Endothelial cell of umbilical vein (primary cell): ENCODE measurements at regions of chr11 and their contacts with region 1.

Region 1: GRCh38 chr11:7986768-7987559 is at the start of gene EIF3F:
- DNase-seq: peak; percentile 100
- H3K4me3 ChIP-seq: peak within 1 kb of the TSS; percentile 71 to 99 (median 98)
- H3K27ac ChIP-seq: peak within 1 kb of the TSS; percentile 67
- H3K4me1 ChIP-seq: peaks cover 41% of the 10 kb centered on the region
- H3K27me3 ChIP-seq: no peaks in the 10 kb centered on the region
- CTCF ChIP-seq: peak; percentile 77 to 84
- POLR2A ChIP-seq: peak; percentile 53
- total RNA-seq, gene EIF3F: 385 and 436 TPM in 2 replicates

Region 2: DNA sequence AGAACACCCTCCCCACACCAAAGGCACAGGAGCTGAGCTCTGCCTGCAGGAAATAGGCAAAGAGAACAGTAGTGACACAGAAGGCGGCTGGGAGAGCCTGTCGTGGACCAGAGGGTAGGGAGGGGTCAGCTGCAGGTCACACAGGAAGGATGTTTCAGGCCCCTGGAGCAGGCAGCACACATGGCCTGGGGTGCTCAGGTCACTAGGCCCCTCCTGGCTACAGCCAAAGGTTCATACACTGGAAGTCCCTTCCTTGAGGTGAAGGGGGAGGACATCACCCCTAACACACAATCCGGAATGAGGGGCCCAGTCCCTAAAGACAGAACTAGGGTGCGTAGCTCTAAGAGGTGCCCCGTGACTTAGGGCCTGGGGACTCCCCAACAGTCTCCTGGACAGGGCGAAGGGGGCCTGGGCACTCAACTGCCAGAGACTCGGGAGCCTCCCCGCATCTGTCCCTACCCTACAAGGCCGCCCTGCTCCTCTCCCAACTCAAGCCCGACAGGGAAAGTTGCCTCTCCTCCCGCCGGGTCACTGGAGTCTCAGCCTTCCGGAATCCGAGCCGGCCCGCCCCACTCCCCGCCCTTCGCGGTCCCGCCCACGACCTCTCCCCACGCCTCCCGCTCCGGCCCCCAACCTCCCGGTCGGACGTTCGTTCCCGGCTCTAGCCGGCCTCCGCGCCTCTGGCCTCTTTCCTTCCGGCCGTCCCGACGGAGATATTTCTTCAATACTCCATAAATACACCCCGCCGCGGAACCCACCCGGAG is 313.8 kb before region 1 on chr11 and contains the start of gene CYB5R2:
- CTCF ChIA-PET with region 1: no interaction called
- POLR2A ChIA-PET with region 1: no interaction called
- dilution Hi-C with region 1: no loop called
- intact Hi-C with region 1: loop called (anchors 5 kb)
- DNase-seq: peak; percentile 15
- H3K4me3 ChIP-seq: peak within 1 kb of the TSS; percentile 25 to 44 (median 32)
- H3K27ac ChIP-seq: no peak within 1 kb of the TSS
- H3K4me1 ChIP-seq: peaks cover 4% of the 10 kb centered on the region
- H3K27me3 ChIP-seq: peaks cover 0 to 4% of the 10 kb centered on the region in 2 experiments
- CTCF ChIP-seq: no peak
- POLR2A ChIP-seq: no peak
- total RNA-seq, gene CYB5R2: 4.2 and 4.8 TPM in 2 replicates

Region 3: GRCh38 chr11:7892840-7893254 is 94.1 kb before region 1 on chr11:
- CTCF ChIA-PET with region 1: interaction called, 132 read pairs
- POLR2A ChIA-PET with region 1: interaction called, 4 read pairs
- dilution Hi-C with region 1: no loop called
- intact Hi-C with region 1: loop called (anchors 1 kb)
- DNase-seq: peak; percentile 68
- H3K4me3 ChIP-seq: no peak overlapping the region
- H3K27ac ChIP-seq: no peak overlapping the region
- H3K4me1 ChIP-seq: peaks cover 4% of the 10 kb centered on the region
- H3K27me3 ChIP-seq: peaks cover 12 to 17% of the 10 kb centered on the region in 2 experiments
- CTCF ChIP-seq: peak; percentile 61 to 66
- POLR2A ChIP-seq: no peak

Region 4: GRCh38 chr11:8006349-8006977 is 19.5 kb after region 1 on chr11:
- CTCF ChIA-PET with region 1: interaction called, 12 read pairs
- POLR2A ChIA-PET with region 1: no interaction called
- dilution Hi-C with region 1: no loop called
- intact Hi-C with region 1: no loop called
- DNase-seq: peak; percentile 61
- H3K4me3 ChIP-seq: no peak overlapping the region
- H3K27ac ChIP-seq: no peak overlapping the region
- H3K4me1 ChIP-seq: no peaks in the 10 kb centered on the region
- H3K27me3 ChIP-seq: peaks cover 0 to 2% of the 10 kb centered on the region in 2 experiments
- CTCF ChIP-seq: peak; percentile 83
- POLR2A ChIP-seq: no peak

Region 5: DNA sequence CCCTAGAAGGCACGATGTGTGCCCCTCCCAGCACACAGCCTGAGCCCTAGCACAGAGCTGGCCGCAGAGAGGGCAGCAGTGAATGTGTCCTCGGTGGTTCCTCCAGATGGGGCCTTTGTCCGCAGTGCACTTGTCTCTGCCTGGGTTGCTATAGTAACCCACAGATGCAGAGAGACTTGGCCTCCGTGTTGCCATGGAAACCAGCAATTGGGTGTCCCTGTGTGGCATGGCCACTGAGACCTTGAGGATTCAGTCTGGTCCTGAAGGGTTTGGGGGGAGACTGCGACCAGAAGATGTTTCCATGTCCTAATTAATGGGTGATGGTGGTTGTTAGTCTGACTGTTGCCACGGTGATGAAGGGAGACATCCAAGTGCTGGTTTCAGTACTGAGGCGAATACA is 51.4 kb after region 1 on chr11:
- CTCF ChIA-PET with region 1: no interaction called
- POLR2A ChIA-PET with region 1: no interaction called
- dilution Hi-C with region 1: no loop called
- intact Hi-C with region 1: no loop called
- DNase-seq: no peak
- H3K4me3 ChIP-seq: no peak overlapping the region
- H3K27ac ChIP-seq: no peak overlapping the region
- H3K4me1 ChIP-seq: no peaks in the 10 kb centered on the region
- H3K27me3 ChIP-seq: peaks cover 0 to 8% of the 10 kb centered on the region in 2 experiments
- CTCF ChIP-seq: no peak
- POLR2A ChIP-seq: no peak

Region 6: GRCh38 chr11:8049084-8049483 is 62.1 kb after region 1 on chr11:
- CTCF ChIA-PET with region 1: no interaction called
- POLR2A ChIA-PET with region 1: no interaction called
- dilution Hi-C with region 1: no loop called
- intact Hi-C with region 1: no loop called
- DNase-seq: no peak
- H3K4me3 ChIP-seq: no peak overlapping the region
- H3K27ac ChIP-seq: no peak overlapping the region
- H3K4me1 ChIP-seq: no peaks in the 10 kb centered on the region
- H3K27me3 ChIP-seq: peaks cover 3 to 18% of the 10 kb centered on the region in 2 experiments
- CTCF ChIP-seq: no peak
- POLR2A ChIP-seq: no peak

Region 7: GRCh38 chr11:8092587-8093424 is 105.8 kb after region 1 on chr11:
- CTCF ChIA-PET with region 1: interaction called, 14 read pairs
- POLR2A ChIA-PET with region 1: no interaction called
- dilution Hi-C with region 1: no loop called
- intact Hi-C with region 1: no loop called
- DNase-seq: peak; percentile 61
- H3K4me3 ChIP-seq: no peak overlapping the region
- H3K27ac ChIP-seq: no peak overlapping the region
- H3K4me1 ChIP-seq: no peaks in the 10 kb centered on the region
- H3K27me3 ChIP-seq: no peaks in the 10 kb centered on the region
- CTCF ChIP-seq: peak; percentile 67 to 68
- POLR2A ChIP-seq: no peak